ENCODE measurements at regions of chr2 and their contacts with region 1.

Region 1: GRCh38 chr2:124027182-124027581 is 2.1 kb downstream of the CNTNAP5 start:
- DNase-seq: no peak
- ATAC-seq: no peak

Region 2: DNA sequence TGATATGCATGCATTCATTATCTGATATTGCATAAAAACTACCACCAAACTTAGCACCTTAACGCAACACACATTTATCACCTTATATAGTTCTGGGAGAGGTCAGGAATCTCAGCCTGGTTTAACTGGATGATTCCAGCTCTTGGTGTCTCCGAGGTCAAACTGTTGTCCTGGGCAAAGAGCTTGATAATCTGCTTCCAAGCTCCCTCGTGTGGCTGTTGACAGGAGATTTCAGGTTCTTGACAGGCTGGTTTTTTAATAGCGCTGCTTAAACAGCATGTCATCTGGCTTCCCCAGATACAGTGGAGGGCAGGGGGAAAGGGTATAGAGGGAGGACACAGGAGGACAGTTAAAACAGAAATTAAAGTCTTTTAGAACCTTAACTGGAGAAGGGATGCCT is 783.0 kb after region 1 on chr2:
- intact Hi-C with region 1: loop called (anchors 2 kb)
- DNase-seq: no peak
- ATAC-seq: peak; percentile 80

Measured in Right ventricle myocardium inferior (tissue), 1 donor.